PC-9 (cell line): ENCODE measurements at regions of chr5 and their contacts with region 1.

Region 1: GRCh38 chr5:23289162-23289561 is 218.2 kb upstream of the PRDM9 start:
- DNase-seq: no peak
- H3K4me3 ChIP-seq: no peak overlapping the region
- H3K27ac ChIP-seq: no peak overlapping the region
- H3K4me1 ChIP-seq: no peaks in the 10 kb centered on the region
- H3K27me3 ChIP-seq: no peaks in the 10 kb centered on the region
- CTCF ChIP-seq: no peak

Region 2: GRCh38 chr5:22889718-22890117 is 399.4 kb before region 1 on chr5:
- CTCF ChIA-PET with region 1: no interaction called
- POLR2A ChIA-PET with region 1: no interaction called
- intact Hi-C with region 1: no loop called
- DNase-seq: no peak
- H3K4me3 ChIP-seq: no peak overlapping the region
- H3K27ac ChIP-seq: no peak overlapping the region
- H3K4me1 ChIP-seq: no peaks in the 10 kb centered on the region
- H3K27me3 ChIP-seq: no peaks in the 10 kb centered on the region
- CTCF ChIP-seq: peak; percentile 48; the same call in 1 of the 2 replicates

Region 3: DNA sequence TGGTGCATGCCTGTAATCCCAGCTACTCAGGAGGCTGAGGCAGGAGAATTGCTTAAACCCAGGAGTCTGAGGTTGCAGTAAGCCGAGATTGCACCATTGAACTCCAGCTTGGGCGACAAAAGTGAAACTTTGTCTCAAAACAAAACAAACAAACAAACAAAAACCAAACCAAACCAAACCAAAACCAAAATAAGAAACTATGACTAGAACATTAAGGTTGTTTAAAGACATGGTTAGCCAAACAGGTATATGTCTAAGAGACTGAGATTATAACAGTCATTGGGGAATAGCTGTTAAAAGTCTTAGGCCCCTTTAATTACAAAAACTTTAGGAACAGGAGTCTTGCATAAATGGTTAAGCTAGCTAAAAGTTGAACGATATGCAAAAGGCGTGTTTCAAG is 281.9 kb after region 1 on chr5:
- CTCF ChIA-PET with region 1: no interaction called
- POLR2A ChIA-PET with region 1: interaction called, 15 read pairs
- intact Hi-C with region 1: no loop called
- DNase-seq: no peak
- H3K4me3 ChIP-seq: no peak overlapping the region
- H3K27ac ChIP-seq: no peak overlapping the region
- H3K4me1 ChIP-seq: no peaks in the 10 kb centered on the region
- H3K27me3 ChIP-seq: no peaks in the 10 kb centered on the region
- CTCF ChIP-seq: no peak